CD8-positive, alpha-beta T cell (primary cell): ENCODE measurements at regions of chr6 and their contacts with region 1.

Region 1: DNA sequence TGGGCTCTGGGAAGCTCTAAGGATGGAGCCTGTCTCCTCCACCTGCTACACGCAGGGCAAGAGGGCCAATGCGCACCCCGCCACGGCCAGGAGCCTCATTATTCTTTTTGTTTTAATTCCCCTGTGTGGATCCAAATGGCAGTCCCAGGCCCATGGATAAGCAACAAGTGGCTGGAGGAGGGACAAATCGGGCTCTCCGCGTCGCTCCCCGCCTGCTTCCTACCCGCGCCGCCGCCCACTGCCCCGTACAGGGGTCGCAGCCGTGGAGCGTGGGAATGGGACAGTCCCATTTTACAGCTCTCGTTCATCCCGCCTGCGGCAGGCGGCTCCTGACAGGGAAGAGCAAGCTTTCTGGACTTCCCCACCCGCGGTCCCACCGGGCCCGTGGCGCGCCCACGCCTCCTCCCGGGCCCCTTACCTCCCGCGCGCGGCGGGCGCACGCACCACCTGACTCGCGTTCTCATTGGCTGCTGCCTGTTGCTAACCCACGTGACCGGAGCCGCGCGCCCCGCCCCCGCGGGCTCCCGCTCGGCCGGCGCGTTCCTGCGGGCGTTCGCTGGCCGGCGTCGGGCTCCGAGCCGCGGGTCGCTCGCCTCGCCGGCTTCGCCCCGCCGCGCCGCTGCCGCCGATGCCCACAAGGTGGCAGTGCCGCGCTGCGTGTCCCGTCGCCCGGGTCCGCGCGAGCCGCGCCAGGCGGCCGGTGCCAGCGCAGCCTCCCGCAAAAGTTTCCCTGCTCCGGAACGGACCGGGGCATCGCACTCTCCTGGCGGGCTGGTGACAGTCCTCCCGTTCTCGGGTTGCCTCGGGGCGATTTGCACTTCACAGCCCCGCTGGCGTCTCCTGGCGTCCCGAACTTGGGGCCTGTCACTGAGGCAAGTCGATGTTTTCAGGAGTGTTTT is 93.3 kb downstream of the CD83 start:
- DNase-seq: peak; percentile 79 to 95 (median 85)
- ATAC-seq: peak; percentile 89
- H3K4me3 ChIP-seq: peak overlapping the region; percentile 52 to 78
- H3K4me3 Mint-ChIP-seq: peak overlapping the region; percentile 89
- H3K27ac ChIP-seq: peak overlapping the region; percentile 11 to 64
- H3K27ac Mint-ChIP-seq: peak overlapping the region; percentile 74
- H3K4me1 ChIP-seq: peaks cover 16% of the 10 kb centered on the region
- H3K4me1 Mint-ChIP-seq: peaks cover 14% of the 10 kb centered on the region
- H3K27me3 ChIP-seq: no peaks in the 10 kb centered on the region
- H3K27me3 Mint-ChIP-seq: no peaks in the 10 kb centered on the region
- CTCF ChIP-seq: peak; percentile 76

Region 2: DNA sequence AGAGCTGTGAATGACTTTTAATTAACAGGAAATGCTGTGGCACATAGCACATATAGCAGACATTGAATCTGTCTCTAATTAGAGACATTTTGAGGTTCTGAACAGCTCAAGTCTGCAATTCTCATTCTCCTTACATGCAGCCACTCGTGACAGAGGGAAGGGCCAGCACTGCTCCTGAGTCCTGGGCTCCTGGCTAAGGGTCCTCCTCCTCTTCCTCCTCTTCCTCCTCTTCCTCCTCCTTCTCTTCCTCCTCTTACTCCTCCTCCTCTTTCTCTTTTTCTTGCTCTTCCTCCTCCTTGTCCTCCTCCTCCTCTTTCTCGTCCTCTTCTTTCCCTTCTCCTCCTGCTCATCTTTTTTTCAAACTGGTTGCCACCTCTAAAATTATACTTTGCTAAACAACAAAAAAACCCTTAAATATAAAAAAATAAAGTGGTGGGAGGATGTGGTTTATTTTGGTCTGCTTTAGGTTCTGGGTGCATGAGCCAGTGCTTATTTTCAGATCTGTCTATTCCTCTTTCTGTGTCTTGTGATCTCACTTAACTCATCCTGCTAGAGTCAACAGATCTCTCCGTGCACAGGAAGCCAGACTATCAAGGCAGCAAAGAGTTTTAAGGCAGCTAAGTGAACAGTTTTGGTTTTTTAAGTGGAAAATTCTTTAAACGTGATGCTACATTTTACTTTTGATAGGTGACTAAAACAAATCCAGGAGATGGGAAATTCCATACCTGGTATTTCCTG is 65.9 kb after region 1 on chr6:
- CTCF ChIA-PET with region 1: interaction called, 7 read pairs
- POLR2A ChIA-PET with region 1: no interaction called
- intact Hi-C with region 1: loop called in 1 of 2 experiments (anchors 2 kb)
- DNase-seq: peak in 5 of 9 experiments; percentile 18 to 82 (median 54)
- ATAC-seq: peak; percentile 98
- H3K4me3 ChIP-seq: peak overlapping the region in 1 of 2 experiments; percentile 4
- H3K4me3 Mint-ChIP-seq: peak overlapping the region; percentile 76
- H3K27ac ChIP-seq: peak overlapping the region; percentile 1 to 53
- H3K27ac Mint-ChIP-seq: peak overlapping the region; percentile 95
- H3K4me1 ChIP-seq: peaks cover 38% of the 10 kb centered on the region
- H3K4me1 Mint-ChIP-seq: peaks cover 48% of the 10 kb centered on the region
- H3K27me3 ChIP-seq: no peaks in the 10 kb centered on the region
- H3K27me3 Mint-ChIP-seq: no peaks in the 10 kb centered on the region
- CTCF ChIP-seq: no peak

Region 3: GRCh38 chr6:14665827-14666724 is 455.2 kb after region 1 on chr6:
- CTCF ChIA-PET with region 1: interaction called, 4 read pairs
- POLR2A ChIA-PET with region 1: no interaction called
- intact Hi-C with region 1: loop called in 1 of 2 experiments (anchors 2 kb)
- DNase-seq: peak in 1 of 9 experiments; percentile 45
- ATAC-seq: no peak
- H3K4me3 ChIP-seq: no peak overlapping the region
- H3K4me3 Mint-ChIP-seq: no peak overlapping the region
- H3K27ac ChIP-seq: no peak overlapping the region
- H3K27ac Mint-ChIP-seq: no peak overlapping the region
- H3K4me1 ChIP-seq: peaks cover 24% of the 10 kb centered on the region
- H3K4me1 Mint-ChIP-seq: peaks cover 22% of the 10 kb centered on the region
- H3K27me3 ChIP-seq: no peaks in the 10 kb centered on the region
- H3K27me3 Mint-ChIP-seq: no peaks in the 10 kb centered on the region
- CTCF ChIP-seq: no peak

Region 4: GRCh38 chr6:14857501-14857900 is 646.6 kb after region 1 on chr6:
- CTCF ChIA-PET with region 1: no interaction called
- POLR2A ChIA-PET with region 1: no interaction called
- intact Hi-C with region 1: loop called in 1 of 2 experiments (anchors 5 kb)
- DNase-seq: peak; percentile 62 to 97 (median 81)
- ATAC-seq: peak; percentile 98
- H3K4me3 ChIP-seq: peak overlapping the region; percentile 23 to 51
- H3K4me3 Mint-ChIP-seq: peak overlapping the region; percentile 81
- H3K27ac ChIP-seq: peak overlapping the region; percentile 68
- H3K27ac Mint-ChIP-seq: peak overlapping the region; percentile 96
- H3K4me1 ChIP-seq: peaks cover 26% of the 10 kb centered on the region
- H3K4me1 Mint-ChIP-seq: peaks cover 29% of the 10 kb centered on the region
- H3K27me3 ChIP-seq: no peaks in the 10 kb centered on the region
- H3K27me3 Mint-ChIP-seq: no peaks in the 10 kb centered on the region
- CTCF ChIP-seq: no peak

Region 5: GRCh38 chr6:15464211-15464725 is 1253.4 kb after region 1 on chr6:
- CTCF ChIA-PET with region 1: interaction called, 7 read pairs
- POLR2A ChIA-PET with region 1: no interaction called
- intact Hi-C with region 1: loop called in 1 of 2 experiments (anchors 1 kb)
- DNase-seq: peak; percentile 16 to 72 (median 59)
- ATAC-seq: peak; percentile 74
- H3K4me3 ChIP-seq: no peak overlapping the region
- H3K4me3 Mint-ChIP-seq: no peak overlapping the region
- H3K27ac ChIP-seq: no peak overlapping the region
- H3K27ac Mint-ChIP-seq: peak overlapping the region; percentile 43
- H3K4me1 ChIP-seq: no peaks in the 10 kb centered on the region
- H3K4me1 Mint-ChIP-seq: peaks cover 51% of the 10 kb centered on the region
- H3K27me3 ChIP-seq: no peaks in the 10 kb centered on the region
- H3K27me3 Mint-ChIP-seq: no peaks in the 10 kb centered on the region
- CTCF ChIP-seq: peak; percentile 78